Adrenal gland (tissue), 19 donors: ENCODE measurements at regions of chr1 and their contacts with region 1.

Region 1: DNA sequence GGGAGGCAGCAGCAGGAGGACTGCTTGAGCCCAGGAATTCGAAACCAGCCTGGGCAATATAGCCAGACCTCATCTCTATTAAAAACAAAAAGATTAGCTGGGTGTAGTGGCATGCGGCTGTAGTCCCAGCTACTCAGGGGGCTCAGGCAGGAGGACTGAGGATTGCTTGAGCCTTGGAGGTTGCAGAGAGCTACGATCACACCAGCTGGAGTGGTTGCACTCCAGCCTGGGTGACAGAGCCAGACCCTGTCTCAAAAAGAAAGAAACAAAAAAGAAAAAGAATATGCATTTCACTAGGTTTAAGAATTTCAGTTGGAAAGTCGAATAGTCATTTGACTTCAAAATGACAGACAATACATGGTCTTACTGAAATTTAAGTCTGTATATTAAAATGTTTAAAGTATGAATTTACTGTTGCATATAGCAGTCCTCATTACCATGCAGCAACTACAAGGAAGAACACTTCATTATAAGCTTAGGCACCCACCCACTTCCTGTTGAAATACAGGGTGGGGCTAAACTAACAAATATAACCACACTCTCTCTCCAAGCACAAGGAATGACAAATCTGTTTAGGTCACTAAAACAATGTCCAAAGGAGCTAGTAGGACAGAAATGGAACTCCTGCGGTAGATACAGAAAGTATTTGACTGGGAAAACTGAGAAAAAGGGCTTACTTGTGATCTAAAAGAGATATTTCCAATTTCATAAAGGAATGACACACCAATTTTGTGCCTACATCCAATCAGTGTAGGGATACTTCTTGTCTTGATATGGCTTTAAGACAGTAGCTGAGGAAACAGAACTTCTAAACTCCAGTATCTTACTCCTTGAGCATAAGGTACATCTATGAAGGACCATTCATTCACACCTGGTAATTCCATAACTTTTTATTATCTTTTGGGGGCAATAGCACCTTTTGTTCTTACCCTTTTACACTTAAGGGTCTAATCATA is 44.1 kb downstream of the GPR3 start:
- DNase-seq: no peak
- H3K4me3 ChIP-seq: no peak overlapping the region
- H3K27ac ChIP-seq: peak overlapping the region; percentile 8 to 70 (median 23)
- H3K4me1 ChIP-seq: peaks cover 47 to 80% of the 10 kb centered on the region in 2 donors
- H3K27me3 ChIP-seq: no peaks in the 10 kb centered on the region
- CTCF ChIP-seq: no peak
- POLR2A ChIP-seq: no peak

Region 2: DNA sequence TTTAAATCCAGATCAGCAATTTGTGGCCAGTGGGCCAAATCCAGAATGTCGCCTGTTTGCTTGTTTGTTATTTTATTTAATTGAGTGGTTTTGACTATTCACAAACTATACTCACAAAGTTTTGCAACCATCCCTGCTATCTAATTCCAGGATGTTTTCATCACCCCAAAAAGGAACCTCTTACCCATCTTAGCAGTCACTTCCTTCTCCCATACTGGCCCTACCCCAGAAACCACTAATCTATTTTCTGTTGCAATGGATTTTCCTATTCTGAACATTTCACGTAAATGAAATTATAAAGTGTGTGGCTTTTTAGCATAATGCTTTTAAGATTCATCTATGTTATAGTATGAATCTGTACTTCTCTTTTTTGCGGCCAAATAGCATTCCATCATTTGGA is 160.8 kb before region 1 on chr1:
- intact Hi-C with region 1: no loop called
- DNase-seq: no peak
- H3K4me3 ChIP-seq: no peak overlapping the region
- H3K27ac ChIP-seq: no peak overlapping the region
- H3K4me1 ChIP-seq: no peaks in the 10 kb centered on the region
- H3K27me3 ChIP-seq: no peaks in the 10 kb centered on the region
- CTCF ChIP-seq: no peak
- POLR2A ChIP-seq: no peak

Region 3: DNA sequence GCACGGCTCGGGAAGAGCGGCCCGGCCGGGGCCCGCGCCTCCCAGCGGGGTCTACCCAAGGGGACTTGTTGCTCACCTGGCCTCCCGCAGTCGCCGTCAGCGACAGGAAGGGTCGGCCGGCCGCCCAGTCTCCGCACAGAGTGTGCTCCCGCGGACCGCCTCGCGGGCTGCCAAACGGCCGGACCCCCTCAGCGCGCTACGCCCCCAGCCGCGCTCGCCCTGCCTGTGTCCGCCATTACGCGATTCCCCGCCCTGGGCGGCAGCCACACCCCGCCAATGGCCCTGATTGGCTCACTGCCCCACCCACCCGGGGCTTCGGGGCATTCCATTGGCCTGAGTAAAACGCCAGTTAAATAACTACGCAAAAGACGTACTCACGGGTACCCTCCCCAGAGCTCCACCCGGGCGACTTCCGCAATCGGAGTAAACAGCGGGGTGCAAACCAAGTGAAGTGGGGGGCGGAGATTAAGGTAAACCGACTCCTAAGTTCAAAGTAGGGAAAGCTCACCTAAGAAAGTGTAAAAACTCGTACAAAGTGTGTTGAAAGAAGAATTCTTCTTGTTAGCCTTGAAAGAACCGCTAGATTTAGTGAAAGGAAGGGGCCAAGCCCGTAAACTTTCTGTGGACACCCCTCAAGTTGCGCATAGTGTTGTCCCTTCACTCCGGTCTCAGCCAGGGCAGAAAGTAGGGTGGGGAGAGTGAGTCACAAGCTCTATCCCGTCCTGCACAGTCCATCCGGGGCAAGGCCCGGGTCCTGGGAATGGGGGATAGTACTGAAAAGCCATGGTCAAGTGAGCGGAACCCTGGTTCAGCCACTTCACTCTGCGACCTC is 53.6 kb after region 1 on chr1 and contains the start of gene WASF2:
- intact Hi-C with region 1: loop called in 1 of 2 experiments (anchors 10 kb)
- DNase-seq: peak; percentile 97 to 99 (median 98)
- H3K4me3 ChIP-seq: peak within 1 kb of the TSS; percentile 11 to 92 (median 77)
- H3K27ac ChIP-seq: peak within 1 kb of the TSS; percentile 55 to 99 (median 96)
- H3K4me1 ChIP-seq: peaks cover 13 to 50% of the 10 kb centered on the region in 2 donors
- H3K27me3 ChIP-seq: no peaks in the 10 kb centered on the region
- CTCF ChIP-seq: no peak
- POLR2A ChIP-seq: peak; percentile 73 to 94
- total RNA-seq, gene WASF2: 17.4 to 159 (median 70.0) TPM